Panc1 (cell line): ENCODE measurements at regions of chrX and their contacts with region 1.

Region 1: GRCh38 chrX:154762523-154763289 is at the start of gene DKC1:
- DNase-seq: peak; percentile 79
- ATAC-seq: peak; percentile 96
- H3K4me3 ChIP-seq: peak within 1 kb of the TSS; percentile 91 to 97
- H3K27ac ChIP-seq: peak within 1 kb of the TSS; percentile 99
- H3K4me1 ChIP-seq: peaks cover 18% of the 10 kb centered on the region
- H3K27me3 ChIP-seq: no peaks in the 10 kb centered on the region
- CTCF ChIP-seq: peak; percentile 30
- total RNA-seq, gene DKC1: 179 TPM

Region 2: GRCh38 chrX:153782313-153782712 is 980.4 kb before region 1 on chrX:
- CTCF ChIA-PET with region 1: no interaction called
- POLR2A ChIA-PET with region 1: no interaction called
- in situ Hi-C with region 1: no loop called
- intact Hi-C with region 1: no loop called
- DNase-seq: no peak
- ATAC-seq: no peak
- H3K4me3 ChIP-seq: no peak overlapping the region
- H3K27ac ChIP-seq: no peak overlapping the region
- H3K4me1 ChIP-seq: peaks cover 16% of the 10 kb centered on the region
- H3K27me3 ChIP-seq: no peaks in the 10 kb centered on the region
- CTCF ChIP-seq: no peak

Region 3: DNA sequence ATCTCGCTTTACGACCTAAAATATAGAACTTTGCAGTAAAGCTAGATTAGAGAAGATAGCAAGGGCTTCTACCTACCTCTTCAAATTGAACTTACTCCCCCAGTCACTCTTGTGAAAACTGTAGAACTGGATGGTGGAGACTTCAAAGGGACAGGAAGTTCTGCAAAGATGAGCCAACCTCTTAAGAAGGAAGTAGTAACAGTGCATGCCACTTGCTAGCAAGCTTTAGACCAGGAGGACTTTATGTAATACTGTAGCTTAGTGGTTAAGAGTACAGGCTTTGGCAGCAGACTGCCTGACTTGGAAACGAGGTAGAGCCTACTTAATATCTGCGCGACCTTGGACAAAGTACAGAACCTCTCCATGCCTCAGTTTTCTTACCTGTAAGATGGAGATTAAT is 426.1 kb after region 1 on chrX:
- CTCF ChIA-PET with region 1: no interaction called
- POLR2A ChIA-PET with region 1: interaction called, 12 read pairs
- in situ Hi-C with region 1: no loop called
- intact Hi-C with region 1: no loop called
- DNase-seq: no peak
- ATAC-seq: no peak
- H3K4me3 ChIP-seq: no peak overlapping the region
- H3K27ac ChIP-seq: no peak overlapping the region
- H3K4me1 ChIP-seq: no peaks in the 10 kb centered on the region
- H3K27me3 ChIP-seq: no peaks in the 10 kb centered on the region
- CTCF ChIP-seq: no peak